GM18951 (cell line): ENCODE measurements at regions of chr9 and their contacts with region 1.

Region 1: GRCh38 chr9:75088260-75088905 is at the start of gene OSTF1:
- POLR2A ChIP-seq: peak; percentile 91

Region 2: DNA sequence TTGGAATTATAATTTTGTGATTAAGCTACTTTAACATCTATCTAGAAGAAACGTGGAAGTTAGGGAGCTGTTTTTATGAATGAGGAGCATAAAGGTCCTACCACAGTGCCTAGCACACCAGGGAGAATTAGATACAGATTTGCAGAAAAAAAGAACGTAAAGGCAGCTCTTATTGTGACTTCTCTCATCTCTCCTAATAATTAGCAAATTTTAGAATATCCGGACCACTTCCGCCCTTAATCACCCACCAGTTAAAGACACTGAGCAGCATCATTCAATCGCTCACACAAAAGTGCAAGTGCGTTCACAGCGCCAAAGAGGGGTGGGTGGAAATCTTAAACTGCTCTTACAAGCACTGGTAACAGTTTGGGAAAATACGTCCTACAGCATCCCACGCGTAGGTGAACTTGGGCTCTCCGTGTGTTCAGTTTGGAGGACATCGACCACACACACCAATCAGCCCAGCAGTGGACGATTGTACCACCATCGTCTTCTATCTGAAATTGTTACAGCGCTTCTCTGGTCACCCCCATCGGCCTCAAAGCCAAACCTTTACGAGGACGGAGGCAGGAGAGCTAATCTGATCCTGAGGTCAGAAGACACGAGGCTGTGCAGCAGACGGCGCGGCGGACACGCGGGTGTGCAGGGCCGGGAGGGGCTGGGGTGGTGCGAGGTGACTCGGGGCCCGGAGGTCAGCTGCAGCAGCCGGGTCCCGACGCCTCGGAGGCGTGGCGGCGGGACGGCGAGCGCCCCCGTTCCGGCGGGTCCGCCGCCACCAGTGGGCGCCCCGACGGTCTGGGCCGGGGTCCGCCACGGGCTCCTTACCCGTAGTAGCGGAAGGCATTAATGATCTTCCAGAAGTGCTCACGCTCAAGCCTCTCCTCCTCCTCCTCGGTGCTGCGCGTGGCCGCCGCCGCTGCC is 60.9 kb before region 1 on chr9:
- in situ Hi-C with region 1: loop called (anchors 10 kb)
- POLR2A ChIP-seq: no peak